ENCODE measurements at regions of chr7 and their contacts with region 1.

Region 1: GRCh38 chr7:44307301-44307900 is 18.0 kb downstream of the CAMK2B start:
- DNase-seq: no peak
- ATAC-seq: no peak
- H3K4me3 ChIP-seq: no peak overlapping the region
- H3K27ac ChIP-seq: no peak overlapping the region
- H3K4me1 ChIP-seq: no peaks in the 10 kb centered on the region
- H3K27me3 ChIP-seq: no peaks in the 10 kb centered on the region

Region 2: GRCh38 chr7:44240983-44241510 is 66.4 kb before region 1 on chr7:
- intact Hi-C with region 1: loop called in 1 of 2 experiments (anchors 5 kb)
- DNase-seq: peak; percentile 87 to 91
- ATAC-seq: peak; percentile 76
- H3K4me3 ChIP-seq: no peak overlapping the region
- H3K27ac ChIP-seq: no peak overlapping the region
- H3K4me1 ChIP-seq: no peaks in the 10 kb centered on the region
- H3K27me3 ChIP-seq: no peaks in the 10 kb centered on the region

Region 3: GRCh38 chr7:44490351-44491200 is 183.2 kb after region 1 on chr7 and contains the start of gene NUDCD3:
- intact Hi-C with region 1: no loop called
- DNase-seq: peak; percentile 87 to 93
- ATAC-seq: peak; percentile 97
- H3K4me3 ChIP-seq: peak within 1 kb of the TSS; percentile 87 to 95
- H3K27ac ChIP-seq: peak within 1 kb of the TSS; percentile 97 to 98
- H3K4me1 ChIP-seq: peaks cover 2 to 11% of the 10 kb centered on the region in 2 donors
- H3K27me3 ChIP-seq: no peaks in the 10 kb centered on the region
- total RNA-seq, gene NUDCD3: 82.4 to 111 TPM

Measured in aorta (tissue), 5 donors.